PC-9 (cell line): ENCODE measurements at regions of chr1 and their contacts with region 1.

Region 1: GRCh38 chr1:17168091-17168876 is 36.6 kb upstream of the PADI1 start:
- DNase-seq: peak; percentile 60 to 86
- H3K4me3 ChIP-seq: peak overlapping the region; percentile 30; the same call in 1 of the 2 replicates
- H3K27ac ChIP-seq: peak overlapping the region; percentile 95
- H3K4me1 ChIP-seq: peaks cover 32% of the 10 kb centered on the region
- H3K27me3 ChIP-seq: no peaks in the 10 kb centered on the region
- CTCF ChIP-seq: no peak

Region 2: GRCh38 chr1:17190010-17190995 is 22.0 kb after region 1 on chr1:
- CTCF ChIA-PET with region 1: no interaction called
- POLR2A ChIA-PET with region 1: no interaction called
- intact Hi-C with region 1: loop called (anchors 1 kb)
- DNase-seq: peak; percentile 90 to 93
- H3K4me3 ChIP-seq: peak overlapping the region; percentile 30
- H3K27ac ChIP-seq: peak overlapping the region; percentile 86
- H3K4me1 ChIP-seq: peaks cover 26% of the 10 kb centered on the region
- H3K27me3 ChIP-seq: no peaks in the 10 kb centered on the region
- CTCF ChIP-seq: no peak

Region 3: GRCh38 chr1:17207966-17208418 is 39.7 kb after region 1 on chr1:
- CTCF ChIA-PET with region 1: interaction called, 3 read pairs
- POLR2A ChIA-PET with region 1: interaction called, 31 read pairs
- intact Hi-C with region 1: no loop called
- DNase-seq: peak; percentile 81 to 83
- H3K4me3 ChIP-seq: peak overlapping the region; percentile 65; the same call in 1 of the 2 replicates
- H3K27ac ChIP-seq: peak overlapping the region; percentile 95
- H3K4me1 ChIP-seq: peaks cover 87% of the 10 kb centered on the region
- H3K27me3 ChIP-seq: no peaks in the 10 kb centered on the region
- CTCF ChIP-seq: no peak

Region 4: GRCh38 chr1:17229383-17229782 is 61.1 kb after region 1 on chr1:
- CTCF ChIA-PET with region 1: no interaction called
- POLR2A ChIA-PET with region 1: interaction called, 13 read pairs
- intact Hi-C with region 1: loop called (anchors 1 kb)
- DNase-seq: peak; percentile 75 to 87
- H3K4me3 ChIP-seq: no peak overlapping the region; the same call in 1 of the 2 replicates
- H3K27ac ChIP-seq: peak overlapping the region; percentile 100
- H3K4me1 ChIP-seq: peaks cover 89% of the 10 kb centered on the region
- H3K27me3 ChIP-seq: no peaks in the 10 kb centered on the region
- CTCF ChIP-seq: no peak

Region 5: DNA sequence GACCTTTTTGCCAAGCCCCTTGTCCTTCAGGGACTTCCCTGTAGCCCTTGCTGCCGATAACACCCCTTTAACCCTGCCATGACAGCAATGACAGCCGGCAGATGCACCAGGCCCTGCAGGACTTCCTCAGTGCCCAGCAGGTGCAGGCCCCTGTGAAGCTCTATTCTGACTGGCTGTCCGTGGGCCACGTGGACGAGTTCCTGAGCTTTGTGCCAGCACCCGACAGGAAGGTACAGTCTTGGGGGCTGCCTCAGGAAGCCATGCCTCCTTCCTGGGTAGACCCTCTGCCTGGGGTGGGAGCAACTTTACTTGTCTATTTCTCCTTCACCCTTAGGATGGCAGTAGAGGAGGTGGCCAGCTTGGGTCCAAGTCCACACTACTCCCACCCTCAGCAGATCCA is 187.6 kb after region 1 on chr1:
- CTCF ChIA-PET with region 1: no interaction called
- POLR2A ChIA-PET with region 1: no interaction called
- intact Hi-C with region 1: no loop called
- DNase-seq: no peak
- H3K4me3 ChIP-seq: no peak overlapping the region
- H3K27ac ChIP-seq: no peak overlapping the region
- H3K4me1 ChIP-seq: no peaks in the 10 kb centered on the region
- H3K27me3 ChIP-seq: no peaks in the 10 kb centered on the region
- CTCF ChIP-seq: no peak

Region 6: GRCh38 chr1:17370618-17371017 is 202.3 kb after region 1 on chr1:
- CTCF ChIA-PET with region 1: interaction called, 11 read pairs
- POLR2A ChIA-PET with region 1: no interaction called
- intact Hi-C with region 1: no loop called
- DNase-seq: peak in 1 of 2 experiments; percentile 45
- H3K4me3 ChIP-seq: no peak overlapping the region
- H3K27ac ChIP-seq: no peak overlapping the region
- H3K4me1 ChIP-seq: peaks cover 32% of the 10 kb centered on the region
- H3K27me3 ChIP-seq: no peaks in the 10 kb centered on the region
- CTCF ChIP-seq: peak; percentile 67

Region 7: GRCh38 chr1:18599086-18599485 is 1430.8 kb after region 1 on chr1:
- CTCF ChIA-PET with region 1: no interaction called
- POLR2A ChIA-PET with region 1: no interaction called
- intact Hi-C with region 1: no loop called
- DNase-seq: no peak
- H3K4me3 ChIP-seq: no peak overlapping the region
- H3K27ac ChIP-seq: no peak overlapping the region
- H3K4me1 ChIP-seq: no peaks in the 10 kb centered on the region
- H3K27me3 ChIP-seq: peaks cover 5% of the 10 kb centered on the region; the same call in 1 of the 2 replicates
- CTCF ChIP-seq: no peak